ENCODE measurements at regions of chr19 and their contacts with region 1.

Region 1: DNA sequence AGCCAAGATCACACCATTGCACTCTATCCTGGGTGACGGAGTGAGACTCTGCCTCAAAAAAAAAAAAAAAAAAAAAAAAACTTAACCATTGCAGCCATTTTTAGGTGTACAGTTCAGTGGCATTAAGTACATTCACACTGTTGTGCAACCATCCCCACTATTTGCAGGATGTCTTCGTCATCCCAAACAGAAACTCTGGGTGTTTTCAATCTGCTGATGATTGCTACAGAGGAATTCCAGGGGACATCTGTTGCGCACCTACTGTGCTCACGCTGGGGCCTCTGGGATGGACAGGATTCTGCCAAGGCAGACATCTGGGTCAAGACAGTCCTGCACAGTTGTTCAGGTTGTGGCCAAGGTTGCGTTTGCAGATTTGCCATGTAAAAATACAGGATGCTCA is 2.4 kb upstream of the APOC4 start:
- DNase-seq: no peak
- H3K4me3 ChIP-seq: no peak overlapping the region
- H3K27ac ChIP-seq: no peak overlapping the region
- H3K4me1 ChIP-seq: no peaks in the 10 kb centered on the region
- H3K27me3 ChIP-seq: no peaks in the 10 kb centered on the region
- CTCF ChIP-seq: no peak
- POLR2A ChIP-seq: no peak

Region 2: DNA sequence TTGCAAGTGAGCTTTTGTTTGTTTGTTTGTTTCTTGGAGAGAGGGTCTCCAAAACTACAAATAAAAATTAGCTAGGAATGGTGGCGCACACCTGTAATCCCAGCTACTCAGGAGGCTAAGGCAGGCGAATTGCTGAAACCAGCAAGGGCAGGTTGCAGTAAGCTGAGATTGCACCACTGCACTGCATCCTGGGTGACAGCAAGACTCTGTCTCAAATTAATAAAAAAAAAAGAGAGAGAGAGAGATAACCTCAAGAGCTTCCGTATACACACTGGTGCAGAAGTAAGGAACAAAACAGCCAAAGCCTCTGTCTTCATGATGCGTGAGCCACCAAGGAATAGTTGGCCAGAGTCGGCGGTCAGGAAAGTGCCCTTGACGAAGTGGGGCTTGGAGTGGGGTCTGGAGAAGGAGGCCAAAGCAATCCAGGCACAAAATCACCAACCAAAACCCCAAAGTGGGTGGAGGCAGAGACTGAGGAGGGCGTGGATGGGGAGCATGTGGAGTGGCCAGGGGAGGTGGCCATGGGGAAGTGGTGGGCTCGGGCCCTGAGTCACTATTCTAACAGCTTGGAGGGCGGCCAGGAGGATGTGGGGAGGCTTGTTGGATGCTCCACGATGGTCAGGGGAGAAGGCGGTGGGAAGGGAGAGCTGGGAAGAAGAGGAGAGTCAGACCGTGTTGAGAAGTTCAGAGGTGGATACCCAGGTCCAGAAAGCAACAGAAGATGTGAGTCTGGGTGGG is 69.8 kb before region 1 on chr19:
- intact Hi-C with region 1: loop called (anchors 2 kb)
- DNase-seq: no peak
- H3K4me3 ChIP-seq: no peak overlapping the region
- H3K27ac ChIP-seq: no peak overlapping the region
- H3K4me1 ChIP-seq: peaks cover 8% of the 10 kb centered on the region
- H3K27me3 ChIP-seq: no peaks in the 10 kb centered on the region
- CTCF ChIP-seq: no peak
- POLR2A ChIP-seq: no peak